Naive thymus-derived CD4-positive, alpha-beta T cell (primary cell): ENCODE measurements at regions of chr6 and their contacts with region 1.

Region 1: DNA sequence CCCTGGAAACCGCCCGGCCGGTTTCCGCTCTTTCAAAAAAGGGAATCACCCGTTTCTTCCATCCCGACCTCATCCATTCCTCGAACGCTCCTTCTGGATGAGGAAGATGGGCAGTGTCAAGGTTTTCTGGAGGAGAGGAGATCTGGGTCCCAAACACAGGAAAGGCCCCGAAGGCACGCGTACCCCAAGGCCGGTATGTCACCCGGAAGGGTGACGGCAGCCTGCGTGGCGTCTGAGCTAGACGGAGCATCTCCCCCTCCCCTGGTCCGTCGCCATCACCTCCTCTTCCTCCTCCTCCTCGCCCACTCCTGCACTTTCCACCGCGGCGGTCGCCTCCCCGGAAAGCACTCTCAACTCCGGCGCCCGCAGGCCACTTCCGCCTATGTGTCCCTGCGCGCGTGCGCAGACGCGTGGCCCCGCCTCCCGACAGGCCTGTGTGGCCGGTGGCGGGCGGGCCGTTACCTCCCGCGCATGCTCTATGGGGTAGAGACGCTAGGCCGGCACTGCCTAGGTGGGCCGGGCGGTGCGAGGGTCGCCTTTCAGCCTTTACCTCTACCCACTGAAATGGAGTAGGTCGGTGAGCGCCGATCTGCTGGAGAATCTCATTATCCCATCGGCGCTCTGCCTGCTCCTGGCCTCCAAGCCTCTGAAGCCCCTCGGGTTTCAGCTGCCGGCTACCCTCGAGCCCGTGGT is at the start of gene SLC35B3:
- DNase-seq: peak; percentile 95 to 100 (median 98)
- ATAC-seq: peak; percentile 95
- H3K4me3 ChIP-seq: peak within 1 kb of the TSS; percentile 99
- H3K4me3 Mint-ChIP-seq: peak within 1 kb of the TSS; percentile 92 to 97 (median 96)
- H3K27ac ChIP-seq: peak within 1 kb of the TSS; percentile 96
- H3K27ac Mint-ChIP-seq: peak within 1 kb of the TSS; percentile 93 to 99 (median 98)
- H3K4me1 ChIP-seq: peaks cover 13 to 24% of the 10 kb centered on the region in 2 donors
- H3K4me1 Mint-ChIP-seq: peaks cover 17 to 57% (median 48%) of the 10 kb centered on the region in 7 donors
- H3K27me3 ChIP-seq: no peaks in the 10 kb centered on the region
- H3K27me3 Mint-ChIP-seq: peaks cover 0 to 3% (median 0%) of the 10 kb centered on the region in 5 donors
- total RNA-seq, gene SLC35B3: 5.5 to 18.5 (median 11.1) TPM

Region 2: DNA sequence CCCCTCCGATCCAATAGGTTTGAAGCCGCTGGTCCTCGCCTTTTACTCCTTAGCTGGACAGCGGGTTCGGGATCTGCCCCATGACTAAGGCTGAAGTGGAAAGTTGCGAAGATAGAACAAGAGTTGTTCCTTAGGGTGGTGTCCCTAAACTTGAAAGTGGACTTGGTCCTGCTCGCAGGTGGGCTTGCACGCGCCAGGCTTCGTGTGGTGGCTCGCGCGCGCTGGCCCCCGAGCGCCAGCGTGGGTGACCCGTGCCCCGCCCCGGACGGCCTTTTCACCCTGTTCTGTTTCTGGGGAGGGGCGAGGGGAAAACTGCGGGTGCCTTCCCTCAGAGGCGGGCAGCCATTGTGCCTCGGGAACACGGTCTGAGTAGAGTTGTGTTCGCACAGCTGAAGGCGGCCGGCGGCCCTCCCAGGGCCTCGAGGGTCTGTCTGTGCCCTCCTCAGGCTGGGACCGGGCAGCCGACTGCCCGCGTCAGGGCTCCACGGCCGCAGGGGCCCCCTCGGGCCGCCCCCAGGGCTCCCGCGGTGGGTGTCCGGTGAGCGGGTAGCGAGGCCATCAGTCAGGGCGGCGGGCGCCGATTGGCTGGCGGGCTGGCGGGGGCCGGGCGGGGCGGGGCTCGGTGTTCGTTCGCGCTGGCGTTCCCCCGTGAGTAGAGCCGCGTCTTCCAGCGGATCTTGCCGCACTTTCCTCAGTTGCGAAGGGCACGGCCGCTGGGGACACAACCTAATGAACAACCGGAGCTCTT is 1294.5 kb before region 1 on chr6:
- CTCF ChIA-PET with region 1: no interaction called
- POLR2A ChIA-PET with region 1: no interaction called
- intact Hi-C with region 1: loop called in 1 of 2 experiments (anchors 5 kb)
- DNase-seq: peak; percentile 69 to 86 (median 78)
- ATAC-seq: peak; percentile 89
- H3K4me3 ChIP-seq: peak overlapping the region; percentile 73
- H3K4me3 Mint-ChIP-seq: peak overlapping the region; percentile 80 to 92 (median 88)
- H3K27ac ChIP-seq: peak overlapping the region; percentile 91
- H3K27ac Mint-ChIP-seq: peak overlapping the region; percentile 85 to 99 (median 96)
- H3K4me1 ChIP-seq: peaks cover 22 to 51% of the 10 kb centered on the region in 2 donors
- H3K4me1 Mint-ChIP-seq: peaks cover 45 to 91% (median 85%) of the 10 kb centered on the region in 7 donors
- H3K27me3 ChIP-seq: no peaks in the 10 kb centered on the region
- H3K27me3 Mint-ChIP-seq: no peaks in the 10 kb centered on the region

Region 3: GRCh38 chr6:7589949-7590917 is 845.1 kb before region 1 on chr6 and contains the start of gene SNRNP48:
- CTCF ChIA-PET with region 1: no interaction called
- POLR2A ChIA-PET with region 1: no interaction called
- intact Hi-C with region 1: loop called in 1 of 2 experiments (anchors 5 kb)
- DNase-seq: peak; percentile 83 to 93 (median 88)
- ATAC-seq: peak; percentile 99
- H3K4me3 ChIP-seq: peak within 1 kb of the TSS; percentile 89
- H3K4me3 Mint-ChIP-seq: peak within 1 kb of the TSS; percentile 93 to 100 (median 99)
- H3K27ac ChIP-seq: peak within 1 kb of the TSS; percentile 77
- H3K27ac Mint-ChIP-seq: peak within 1 kb of the TSS; percentile 90 to 97 (median 94)
- H3K4me1 ChIP-seq: peaks cover 12 to 17% of the 10 kb centered on the region in 2 donors
- H3K4me1 Mint-ChIP-seq: peaks cover 28 to 62% (median 54%) of the 10 kb centered on the region in 7 donors
- H3K27me3 ChIP-seq: no peaks in the 10 kb centered on the region
- H3K27me3 Mint-ChIP-seq: peaks cover 0 to 2% (median 0%) of the 10 kb centered on the region in 5 donors
- total RNA-seq, gene SNRNP48: 8.6 to 30.4 (median 15.3) TPM

Region 4: DNA sequence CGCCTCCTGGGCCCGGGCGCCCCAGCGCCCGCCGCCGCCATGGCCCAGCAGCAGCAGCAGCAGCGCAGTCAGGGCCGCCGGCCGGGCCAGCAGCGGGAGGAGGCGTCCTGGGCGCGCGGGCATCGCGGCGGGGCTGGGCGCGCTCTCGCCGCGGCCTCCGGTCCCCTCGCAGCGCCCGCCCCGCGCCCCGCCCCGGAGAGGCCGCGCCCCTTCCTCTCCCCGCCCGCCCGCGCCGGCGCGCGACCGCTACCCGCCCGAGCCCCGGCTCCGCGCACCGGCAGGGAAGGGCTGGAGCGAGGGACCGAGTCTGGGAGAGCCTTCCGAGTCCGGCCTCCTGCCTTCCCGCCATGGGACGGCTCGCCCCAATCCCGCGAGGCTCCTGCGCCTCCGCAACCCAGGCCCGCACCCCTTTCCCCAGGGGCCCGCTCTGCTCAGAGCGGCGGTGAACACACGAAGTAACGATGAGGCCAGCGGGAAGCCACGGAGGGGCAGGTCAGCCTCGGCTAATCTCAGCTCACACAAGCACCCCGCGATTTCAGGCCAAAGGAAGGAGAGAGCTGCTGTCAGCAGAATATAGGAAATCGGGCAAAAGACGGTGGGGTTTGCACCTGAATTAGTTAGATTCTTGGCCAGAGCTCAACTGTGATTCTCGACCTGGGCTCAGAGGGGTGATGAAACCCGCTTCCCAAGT is 524.5 kb before region 1 on chr6 and contains the start of gene TXNDC5:
- CTCF ChIA-PET with region 1: no interaction called
- POLR2A ChIA-PET with region 1: no interaction called
- intact Hi-C with region 1: loop called in 1 of 2 experiments (anchors 10 kb)
- DNase-seq: peak; percentile 35 to 82 (median 55)
- ATAC-seq: peak; percentile 91
- H3K4me3 ChIP-seq: peak within 1 kb of the TSS; percentile 76
- H3K4me3 Mint-ChIP-seq: peak within 1 kb of the TSS in 9 of 10 donors; percentile 68 to 89 (median 78)
- H3K27ac ChIP-seq: peak within 1 kb of the TSS; percentile 46
- H3K27ac Mint-ChIP-seq: peak within 1 kb of the TSS in 5 of 9 donors; percentile 3 to 76 (median 27)
- H3K4me1 ChIP-seq: peaks cover 6 to 16% of the 10 kb centered on the region in 2 donors
- H3K4me1 Mint-ChIP-seq: peaks cover 4 to 18% (median 6%) of the 10 kb centered on the region in 7 donors
- H3K27me3 ChIP-seq: no peaks in the 10 kb centered on the region
- H3K27me3 Mint-ChIP-seq: no peaks in the 10 kb centered on the region
- total RNA-seq, gene TXNDC5: 11.5 to 48.6 (median 34.8) TPM

Region 5: DNA sequence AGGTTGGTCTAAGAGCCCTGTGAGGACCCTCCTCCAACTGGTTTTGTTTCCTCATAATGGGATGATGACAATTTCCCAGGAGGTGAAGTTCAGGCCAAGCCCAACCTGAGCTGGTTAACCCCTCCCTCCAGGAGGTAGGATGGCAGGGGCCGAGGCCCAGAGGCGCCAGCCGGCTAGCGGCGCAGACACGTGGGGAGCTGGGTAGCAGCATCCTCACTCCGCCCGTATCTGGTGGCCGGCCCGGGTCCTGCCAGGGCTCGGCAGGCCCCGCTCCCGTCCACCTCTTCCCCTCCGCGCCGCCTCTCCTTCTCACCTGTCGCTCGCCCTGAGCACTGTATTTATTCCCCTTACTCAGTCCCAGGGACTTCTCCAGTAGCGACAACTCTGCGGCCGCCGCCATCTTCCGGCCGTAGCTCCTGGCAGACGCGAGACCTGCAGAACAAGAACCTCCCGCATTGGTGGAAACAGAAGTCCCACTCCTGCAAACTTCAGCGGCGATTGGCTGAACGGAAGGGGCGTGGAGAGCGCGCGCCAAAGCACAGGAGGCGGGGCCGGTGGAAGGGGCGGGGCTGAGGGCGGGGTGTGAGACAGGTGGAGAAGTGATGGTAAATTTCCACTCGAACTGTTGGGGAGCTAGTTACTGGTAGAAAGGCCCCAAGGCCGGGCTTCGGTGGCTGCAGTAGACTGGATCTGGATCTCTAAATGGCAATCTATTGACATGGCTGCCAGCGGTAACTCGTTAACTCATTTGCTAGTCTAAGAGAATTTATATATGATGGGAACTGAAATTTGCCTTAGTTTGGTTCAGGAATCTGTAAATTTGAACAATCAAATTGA is 333.0 kb before region 1 on chr6 and contains the start of gene EEF1E1:
- CTCF ChIA-PET with region 1: no interaction called
- POLR2A ChIA-PET with region 1: no interaction called
- intact Hi-C with region 1: loop called (anchors 1 kb)
- DNase-seq: peak; percentile 77 to 97 (median 92)
- ATAC-seq: peak; percentile 100
- H3K4me3 ChIP-seq: peak within 1 kb of the TSS; percentile 75
- H3K4me3 Mint-ChIP-seq: peak within 1 kb of the TSS; percentile 85 to 100 (median 98)
- H3K27ac ChIP-seq: peak within 1 kb of the TSS; percentile 78
- H3K27ac Mint-ChIP-seq: peak within 1 kb of the TSS; percentile 91 to 99 (median 95)
- H3K4me1 ChIP-seq: peaks cover 6 to 8% of the 10 kb centered on the region in 2 donors
- H3K4me1 Mint-ChIP-seq: peaks cover 21 to 43% (median 34%) of the 10 kb centered on the region in 7 donors
- H3K27me3 ChIP-seq: no peaks in the 10 kb centered on the region
- H3K27me3 Mint-ChIP-seq: peaks cover 13 to 27% (median 18%) of the 10 kb centered on the region in 5 donors
- total RNA-seq, gene EEF1E1: 10.2 to 41.0 (median 21.0) TPM

Region 6: DNA sequence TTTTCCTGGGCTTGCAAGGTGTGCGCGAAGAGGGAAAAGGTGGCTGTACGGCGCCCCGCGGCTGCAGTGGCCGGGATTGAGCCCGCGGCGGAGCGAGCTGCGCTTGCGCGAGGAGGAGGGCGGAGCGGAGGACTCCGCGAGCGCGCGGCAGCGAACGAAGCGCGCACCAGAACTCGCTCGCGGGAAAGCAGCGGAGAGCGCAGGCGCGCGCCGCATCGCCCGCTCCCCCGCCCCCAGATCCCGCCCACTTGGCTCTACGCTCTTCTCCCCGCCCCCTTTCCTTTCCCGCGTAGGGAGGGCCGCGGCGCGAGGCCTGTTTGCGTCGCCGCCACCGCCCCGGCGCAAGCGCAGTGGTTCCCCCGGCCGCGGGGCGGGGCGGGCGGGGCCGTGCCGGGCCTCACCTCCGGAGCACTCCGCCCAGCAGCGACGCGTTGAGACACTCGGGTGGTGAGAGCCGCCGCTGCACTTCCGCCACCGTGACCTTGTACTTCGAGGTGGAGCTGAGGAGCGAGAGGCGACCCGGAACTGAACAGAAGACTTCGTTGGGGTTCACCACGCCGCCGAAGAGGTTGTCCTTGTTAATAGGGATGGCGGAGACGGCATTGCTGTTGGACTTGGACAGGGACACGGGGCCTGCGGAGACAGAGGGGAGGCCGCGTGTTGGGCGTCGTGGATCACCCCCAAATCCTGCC is 1968.9 kb after region 1 on chr6:
- CTCF ChIA-PET with region 1: no interaction called
- POLR2A ChIA-PET with region 1: no interaction called
- intact Hi-C with region 1: loop called (anchors 2 to 10 kb)
- DNase-seq: peak; percentile 77 to 90 (median 83)
- ATAC-seq: peak; percentile 93
- H3K4me3 ChIP-seq: peak overlapping the region; percentile 77
- H3K4me3 Mint-ChIP-seq: peak overlapping the region; percentile 79 to 91 (median 84)
- H3K27ac ChIP-seq: peak overlapping the region; percentile 9
- H3K27ac Mint-ChIP-seq: peak overlapping the region in 8 of 9 donors; percentile 41 to 90 (median 72)
- H3K4me1 ChIP-seq: peaks cover 10 to 12% of the 10 kb centered on the region in 2 donors
- H3K4me1 Mint-ChIP-seq: peaks cover 6 to 20% (median 14%) of the 10 kb centered on the region in 7 donors
- H3K27me3 ChIP-seq: peaks cover 0 to 9% of the 10 kb centered on the region in 2 donors
- H3K27me3 Mint-ChIP-seq: peaks cover 48 to 90% (median 66%) of the 10 kb centered on the region in 5 donors